Left ventricle myocardium superior (tissue), 1 donor: ENCODE measurements at regions of chr1 and their contacts with region 1.

Region 1: DNA sequence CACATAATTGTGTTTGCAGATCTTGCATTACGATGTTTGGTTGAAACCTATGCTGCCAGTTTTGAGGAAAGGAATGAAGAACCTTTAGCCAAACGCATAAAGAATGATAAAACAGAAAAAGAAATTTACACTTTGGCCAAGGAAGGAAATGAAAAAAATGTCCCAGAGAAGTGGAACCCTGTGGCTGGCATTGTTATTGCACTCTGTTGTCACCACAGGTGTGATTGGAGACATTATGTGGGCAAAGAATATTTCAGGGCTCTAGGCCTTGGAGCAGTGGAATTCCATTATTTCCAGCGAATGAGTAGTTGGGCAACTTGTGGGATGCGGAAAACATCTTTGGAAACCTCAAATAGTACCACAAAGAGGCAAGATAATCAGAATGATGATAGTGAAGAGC is 14.9 kb downstream of the TRMT13 start:
- DNase-seq: no peak
- ATAC-seq: no peak

Region 2: GRCh38 chr1:99886841-99887240 is 261.0 kb before region 1 on chr1:
- intact Hi-C with region 1: loop called (anchors 10 kb)
- DNase-seq: no peak
- ATAC-seq: no peak

Region 3: GRCh38 chr1:100366209-100366525 is 218.3 kb after region 1 on chr1:
- intact Hi-C with region 1: no loop called
- DNase-seq: no peak
- ATAC-seq: no peak